Natural killer cell (primary cell): ENCODE measurements at regions of chr11 and their contacts with region 1.

Region 1: DNA sequence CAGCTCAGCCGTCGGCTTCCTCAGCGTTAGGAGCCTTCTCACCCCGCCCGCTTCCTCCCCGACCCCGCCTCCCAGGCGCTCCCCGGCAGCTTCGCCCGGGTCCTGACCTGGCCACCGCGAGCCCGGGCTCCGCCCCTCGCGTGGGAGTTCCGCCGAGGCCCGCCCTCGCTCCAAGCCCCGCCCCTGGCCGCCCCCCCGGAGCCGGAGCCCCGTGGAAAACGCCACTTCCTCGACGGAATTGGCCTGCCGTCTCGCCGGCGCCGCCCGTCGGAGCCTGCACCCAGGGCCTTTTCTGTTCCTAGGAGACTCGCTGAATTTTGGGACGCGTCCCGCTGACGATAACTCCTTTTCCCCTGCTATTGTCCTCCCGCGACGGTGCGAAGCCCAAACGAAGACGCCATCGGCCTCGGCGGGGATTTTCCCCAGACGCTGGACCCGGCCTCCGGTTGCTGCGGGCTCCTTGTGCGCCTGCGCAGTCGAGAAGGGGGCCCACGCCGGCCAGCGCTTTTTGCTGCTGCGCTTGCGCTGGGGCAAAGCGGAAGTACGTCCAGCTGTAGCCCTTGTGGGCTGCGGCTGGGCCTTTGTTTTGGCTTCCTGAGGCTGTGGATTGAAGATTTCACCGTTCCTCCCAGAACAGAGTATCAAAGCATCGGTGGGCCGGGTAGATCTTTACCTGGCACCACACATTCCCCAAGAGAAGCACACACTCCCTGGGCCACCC is 10.0 kb downstream of the RELA start:
- DNase-seq: peak; percentile 98
- ATAC-seq: peak; percentile 78 to 95 (median 80)
- H3K4me3 ChIP-seq: peak overlapping the region; percentile 54
- H3K4me3 Mint-ChIP-seq: peak overlapping the region; percentile 95
- H3K27ac ChIP-seq: peak overlapping the region; percentile 95
- H3K27ac Mint-ChIP-seq: peak overlapping the region; percentile 97 to 99
- H3K4me1 ChIP-seq: peaks cover 49% of the 10 kb centered on the region
- H3K4me1 Mint-ChIP-seq: peaks cover 51 to 73% of the 10 kb centered on the region in 2 donors
- H3K27me3 ChIP-seq: no peaks in the 10 kb centered on the region
- H3K27me3 Mint-ChIP-seq: no peaks in the 10 kb centered on the region
- CTCF ChIP-seq: no peak

Region 2: DNA sequence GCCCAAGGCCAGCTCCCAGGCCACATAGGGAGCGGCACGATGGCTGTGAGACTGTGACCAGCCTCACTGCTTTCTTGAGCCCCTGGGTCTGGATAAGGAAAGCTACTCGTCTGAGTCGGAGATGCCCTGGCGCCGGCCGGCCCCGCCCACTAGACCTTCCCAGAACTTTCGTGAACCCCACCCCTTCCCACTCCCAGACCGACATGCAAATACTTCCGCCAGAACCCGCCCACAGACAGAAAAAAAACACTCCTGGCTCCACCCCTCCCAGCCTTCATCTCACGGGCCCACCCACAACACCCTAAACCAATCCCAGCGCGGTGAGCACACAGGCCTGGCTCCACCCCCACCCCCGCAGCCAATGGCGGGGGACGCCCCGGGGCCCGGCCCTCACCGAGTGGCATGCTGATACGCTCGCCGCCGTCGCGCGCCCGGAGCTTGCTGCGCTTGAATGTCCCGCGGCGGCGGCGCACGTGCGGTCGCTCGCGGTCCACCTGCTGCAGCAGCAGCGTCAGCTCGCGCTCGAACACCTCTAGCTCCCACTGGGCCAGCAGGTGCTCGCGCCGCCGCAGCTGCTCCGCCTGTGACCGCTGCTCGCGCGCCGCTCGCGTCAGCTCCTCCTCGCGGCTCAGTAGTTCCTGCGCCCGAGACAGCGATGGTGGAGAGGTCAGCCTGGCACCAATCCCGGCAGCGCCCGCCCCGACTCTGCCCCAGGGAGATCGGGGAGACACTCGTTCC is 45.6 kb before region 1 on chr11:
- intact Hi-C with region 1: no loop called
- DNase-seq: no peak
- ATAC-seq: peak in 1 of 3 donors; percentile 26
- H3K4me3 ChIP-seq: no peak overlapping the region
- H3K4me3 Mint-ChIP-seq: no peak overlapping the region
- H3K27ac ChIP-seq: no peak overlapping the region
- H3K27ac Mint-ChIP-seq: no peak overlapping the region
- H3K4me1 ChIP-seq: peaks cover 24% of the 10 kb centered on the region
- H3K4me1 Mint-ChIP-seq: peaks cover 22 to 31% of the 10 kb centered on the region in 2 donors
- H3K27me3 ChIP-seq: no peaks in the 10 kb centered on the region
- H3K27me3 Mint-ChIP-seq: no peaks in the 10 kb centered on the region
- CTCF ChIP-seq: no peak

Region 3: DNA sequence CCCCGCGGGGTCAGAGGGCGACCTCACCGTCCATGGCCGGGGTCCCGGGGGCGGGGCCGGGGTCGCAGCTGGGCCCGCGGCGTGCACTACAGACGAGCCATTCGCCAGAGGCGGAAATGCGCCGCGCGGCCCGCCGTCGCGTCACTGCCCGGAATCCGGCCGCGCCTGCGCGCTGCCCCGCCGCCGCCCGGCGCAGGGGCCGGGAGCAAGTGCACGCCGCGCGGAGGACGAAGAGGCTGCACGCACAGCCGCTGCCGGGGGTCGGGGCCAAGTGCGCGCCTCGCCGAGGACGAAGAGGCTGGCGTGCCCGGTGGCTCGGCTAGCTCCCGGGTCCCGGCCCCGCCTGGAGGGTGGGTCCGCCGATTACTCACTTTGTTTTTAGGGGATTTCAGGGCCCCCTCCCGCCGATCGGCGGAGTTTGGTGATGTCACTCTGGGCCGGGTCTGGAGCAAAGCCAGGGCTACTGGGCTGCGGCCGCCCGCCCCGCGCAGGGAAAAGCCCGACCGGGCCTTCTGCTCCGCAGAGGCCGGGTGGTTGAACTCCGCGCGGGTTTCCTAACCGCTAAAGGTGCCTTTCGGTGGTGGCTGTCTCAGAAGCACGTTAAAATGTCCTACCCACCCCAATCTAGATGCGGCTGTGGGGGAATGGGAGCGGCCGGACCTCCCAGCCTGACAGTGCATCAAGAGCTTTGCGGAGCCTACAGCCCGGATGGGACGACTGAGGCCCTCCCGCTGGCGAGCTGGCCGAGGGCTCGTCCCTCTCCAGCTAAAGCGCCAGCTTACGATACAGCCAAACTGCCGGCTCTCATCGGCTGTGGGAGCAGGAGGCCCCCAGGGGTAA is 10.3 kb after region 1 on chr11 and contains the start of gene RELA:
- intact Hi-C with region 1: loop called (anchors 1 kb)
- DNase-seq: peak; percentile 89 to 94
- ATAC-seq: peak; percentile 83 to 92 (median 84)
- H3K4me3 ChIP-seq: peak within 1 kb of the TSS; percentile 95
- H3K4me3 Mint-ChIP-seq: peak within 1 kb of the TSS; percentile 92
- H3K27ac ChIP-seq: peak within 1 kb of the TSS; percentile 98
- H3K27ac Mint-ChIP-seq: peak within 1 kb of the TSS; percentile 92 to 93
- H3K4me1 ChIP-seq: peaks cover 46% of the 10 kb centered on the region
- H3K4me1 Mint-ChIP-seq: peaks cover 18 to 29% of the 10 kb centered on the region in 2 donors
- H3K27me3 ChIP-seq: no peaks in the 10 kb centered on the region
- H3K27me3 Mint-ChIP-seq: no peaks in the 10 kb centered on the region
- CTCF ChIP-seq: no peak
- total RNA-seq, gene RELA: 319 to 380 (median 338) TPM

Region 4: DNA sequence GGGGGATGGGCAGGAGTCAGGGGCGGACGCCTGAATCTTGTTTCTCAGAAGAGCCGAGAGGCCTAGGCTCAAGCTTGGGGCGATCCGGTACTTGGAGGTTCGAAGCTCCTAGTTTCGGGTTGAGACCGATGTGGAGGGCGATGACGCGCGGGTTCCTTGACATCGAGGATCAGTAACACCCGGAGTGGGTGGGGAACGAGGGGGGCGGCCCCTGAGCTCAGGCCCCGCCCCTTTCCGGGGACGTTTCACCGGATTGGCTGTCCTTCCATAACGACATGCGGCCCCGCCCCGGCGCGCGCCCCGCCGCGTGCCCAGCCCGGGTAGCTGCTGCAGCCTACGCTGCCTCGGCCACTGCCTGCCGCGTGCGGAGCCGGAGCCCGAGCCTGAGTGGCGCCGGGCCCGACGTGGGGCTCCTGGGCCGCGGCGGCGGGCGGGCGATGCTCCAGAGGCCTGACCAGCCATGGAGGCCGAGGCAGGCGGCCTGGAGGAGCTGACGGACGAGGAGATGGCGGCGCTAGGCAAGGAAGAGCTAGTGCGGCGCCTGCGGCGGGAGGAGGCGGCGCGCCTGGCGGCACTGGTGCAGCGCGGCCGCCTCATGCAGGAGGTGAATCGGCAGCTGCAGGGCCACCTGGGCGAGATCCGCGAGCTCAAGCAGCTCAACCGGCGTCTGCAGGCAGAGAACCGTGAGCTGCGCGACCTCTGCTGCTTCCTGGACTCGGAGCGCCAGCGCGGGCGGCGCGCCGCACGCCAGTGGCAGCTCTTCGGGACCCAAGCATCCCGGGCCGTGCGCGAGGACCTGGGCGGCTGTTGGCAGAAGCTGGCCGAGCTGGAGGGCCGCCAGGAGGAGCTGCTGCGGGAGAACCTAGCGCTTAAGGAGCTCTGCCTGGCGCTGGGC is 237.9 kb after region 1 on chr11 and contains the start of gene CCDC85B:
- intact Hi-C with region 1: no loop called
- DNase-seq: peak; percentile 98 to 99
- ATAC-seq: peak; percentile 74 to 90 (median 78)
- H3K4me3 ChIP-seq: peak within 1 kb of the TSS; percentile 53
- H3K4me3 Mint-ChIP-seq: peak within 1 kb of the TSS; percentile 88
- H3K27ac ChIP-seq: peak within 1 kb of the TSS; percentile 97
- H3K27ac Mint-ChIP-seq: peak within 1 kb of the TSS; percentile 88 to 96
- H3K4me1 ChIP-seq: peaks cover 68% of the 10 kb centered on the region
- H3K4me1 Mint-ChIP-seq: peaks cover 57 to 62% of the 10 kb centered on the region in 2 donors
- H3K27me3 ChIP-seq: no peaks in the 10 kb centered on the region
- H3K27me3 Mint-ChIP-seq: no peaks in the 10 kb centered on the region
- CTCF ChIP-seq: no peak
- total RNA-seq, gene CCDC85B: 22.6 to 36.1 (median 24.1) TPM